GM13977 (cell line): ENCODE measurements at regions of chr2 and their contacts with region 1.

Region 1: GRCh38 chr2:64865073-64865830 is 123.9 kb upstream of the SLC1A4 start:
- DNase-seq: peak; percentile 91
- CTCF ChIP-seq: peak; percentile 73

Region 2: DNA sequence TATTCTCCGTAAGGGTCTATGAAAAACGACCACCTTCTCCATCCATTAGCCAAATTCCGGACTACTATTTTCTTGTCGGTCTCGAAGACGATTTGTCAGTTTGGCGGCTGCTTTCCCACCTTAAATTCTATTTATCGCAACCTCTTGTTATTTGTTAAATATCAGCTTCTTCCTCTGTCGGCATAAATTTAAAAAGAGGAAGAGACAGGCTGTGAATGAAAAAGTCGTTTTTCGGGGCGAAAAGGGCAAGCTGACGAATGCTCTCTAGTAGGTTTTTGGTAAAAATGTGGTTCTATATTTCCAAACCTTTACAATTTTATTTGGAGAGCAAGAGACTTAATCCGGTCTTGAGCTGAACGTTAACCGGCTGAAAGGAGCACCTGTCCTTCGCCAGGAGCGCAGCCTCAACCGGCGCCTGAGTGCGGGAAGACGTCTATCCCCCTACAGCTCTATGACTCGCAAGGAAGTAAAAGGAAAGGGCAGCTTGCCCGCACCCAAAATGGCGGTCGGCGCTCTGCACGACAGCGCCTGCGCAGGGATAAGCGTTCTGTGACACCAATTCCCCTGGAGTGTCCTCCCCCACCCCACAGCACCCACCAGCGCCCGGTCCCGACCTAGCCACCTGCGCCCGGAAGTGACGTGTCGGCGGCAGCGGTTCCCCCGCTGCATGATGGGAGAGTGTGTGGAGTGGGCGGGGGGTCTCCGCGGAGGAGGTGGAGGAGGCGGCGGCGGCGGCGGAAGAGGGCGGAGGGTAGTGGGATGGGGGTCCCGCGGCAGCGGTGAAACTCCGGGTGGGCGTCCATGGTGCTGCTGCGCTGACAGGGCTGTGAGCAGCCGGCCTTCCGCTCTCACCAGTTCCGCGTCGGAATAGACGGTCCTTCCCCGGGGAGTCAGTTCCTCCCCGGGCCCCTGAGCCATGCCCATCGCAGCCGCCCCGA is 341.3 kb before region 1 on chr2 and contains the start of gene AFTPH:
- in situ Hi-C with region 1: loop called (anchors 10 kb)
- DNase-seq: peak; percentile 98
- CTCF ChIP-seq: peak; percentile 10

Region 3: GRCh38 chr2:64595397-64596160 is 269.7 kb before region 1 on chr2:
- in situ Hi-C with region 1: loop called (anchors 10 kb)
- DNase-seq: no peak
- CTCF ChIP-seq: no peak

Region 4: GRCh38 chr2:64644177-64645004 is 220.9 kb before region 1 on chr2:
- in situ Hi-C with region 1: loop called (anchors 10 kb)
- DNase-seq: peak; percentile 75
- CTCF ChIP-seq: peak; percentile 5